ENCODE measurements at regions of chr2 and their contacts with region 1.

Region 1: GRCh38 chr2:9630749-9631483 is at the start of gene YWHAQ:
- DNase-seq: peak; percentile 99
- H3K4me3 Mint-ChIP-seq: peak within 1 kb of the TSS; percentile 96
- H3K27ac Mint-ChIP-seq: peak within 1 kb of the TSS; percentile 96
- H3K4me1 Mint-ChIP-seq: peaks cover 42% of the 10 kb centered on the region
- H3K27me3 Mint-ChIP-seq: peaks cover 13% of the 10 kb centered on the region
- total RNA-seq, gene YWHAQ: 321 and 335 TPM in 2 replicates

Region 2: GRCh38 chr2:9474361-9474967 is 156.5 kb before region 1 on chr2 and contains the start of gene IAH1:
- intact Hi-C with region 1: loop called (anchors 5 kb)
- DNase-seq: peak; percentile 92
- H3K4me3 Mint-ChIP-seq: peak within 1 kb of the TSS; percentile 82
- H3K27ac Mint-ChIP-seq: peak within 1 kb of the TSS; percentile 86
- H3K4me1 Mint-ChIP-seq: peaks cover 31% of the 10 kb centered on the region
- H3K27me3 Mint-ChIP-seq: no peaks in the 10 kb centered on the region
- total RNA-seq, gene IAH1: 76.0 and 78.6 TPM in 2 replicates

Region 3: GRCh38 chr2:9613291-9613690 is 17.6 kb before region 1 on chr2:
- intact Hi-C with region 1: loop called (anchors 1 kb)
- DNase-seq: no peak
- H3K4me3 Mint-ChIP-seq: no peak overlapping the region
- H3K27ac Mint-ChIP-seq: no peak overlapping the region
- H3K4me1 Mint-ChIP-seq: peaks cover 77% of the 10 kb centered on the region
- H3K27me3 Mint-ChIP-seq: no peaks in the 10 kb centered on the region

Region 4: GRCh38 chr2:9703085-9703641 is 72.2 kb after region 1 on chr2:
- intact Hi-C with region 1: loop called (anchors 1 kb)
- DNase-seq: peak; percentile 93
- H3K4me3 Mint-ChIP-seq: peak overlapping the region; percentile 32
- H3K27ac Mint-ChIP-seq: peak overlapping the region; percentile 64
- H3K4me1 Mint-ChIP-seq: peaks cover 41% of the 10 kb centered on the region
- H3K27me3 Mint-ChIP-seq: peaks cover 2% of the 10 kb centered on the region

Region 5: DNA sequence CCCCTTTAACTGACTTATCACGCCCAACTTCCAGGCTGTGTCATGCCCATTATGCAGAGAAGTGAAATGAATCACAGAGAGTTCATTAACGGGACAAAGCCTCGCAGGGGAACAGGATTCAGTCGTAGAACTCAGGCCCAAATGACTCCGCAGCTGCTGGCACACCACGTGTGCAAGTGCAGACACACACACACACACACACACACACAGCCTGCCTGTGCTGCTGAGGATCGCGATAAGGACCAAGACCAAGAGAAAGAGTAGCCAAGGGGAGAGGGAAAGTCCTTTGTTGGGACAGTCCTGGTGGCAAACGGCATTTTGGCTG is 122.3 kb after region 1 on chr2:
- intact Hi-C with region 1: loop called (anchors 1 kb)
- DNase-seq: peak; percentile 83
- H3K4me3 Mint-ChIP-seq: peak overlapping the region; percentile 56
- H3K27ac Mint-ChIP-seq: peak overlapping the region; percentile 88
- H3K4me1 Mint-ChIP-seq: peaks cover 59% of the 10 kb centered on the region
- H3K27me3 Mint-ChIP-seq: peaks cover 32% of the 10 kb centered on the region